Vagina (tissue), 2 donors: ENCODE measurements at regions of chr18 and their contacts with region 1.

Region 1: DNA sequence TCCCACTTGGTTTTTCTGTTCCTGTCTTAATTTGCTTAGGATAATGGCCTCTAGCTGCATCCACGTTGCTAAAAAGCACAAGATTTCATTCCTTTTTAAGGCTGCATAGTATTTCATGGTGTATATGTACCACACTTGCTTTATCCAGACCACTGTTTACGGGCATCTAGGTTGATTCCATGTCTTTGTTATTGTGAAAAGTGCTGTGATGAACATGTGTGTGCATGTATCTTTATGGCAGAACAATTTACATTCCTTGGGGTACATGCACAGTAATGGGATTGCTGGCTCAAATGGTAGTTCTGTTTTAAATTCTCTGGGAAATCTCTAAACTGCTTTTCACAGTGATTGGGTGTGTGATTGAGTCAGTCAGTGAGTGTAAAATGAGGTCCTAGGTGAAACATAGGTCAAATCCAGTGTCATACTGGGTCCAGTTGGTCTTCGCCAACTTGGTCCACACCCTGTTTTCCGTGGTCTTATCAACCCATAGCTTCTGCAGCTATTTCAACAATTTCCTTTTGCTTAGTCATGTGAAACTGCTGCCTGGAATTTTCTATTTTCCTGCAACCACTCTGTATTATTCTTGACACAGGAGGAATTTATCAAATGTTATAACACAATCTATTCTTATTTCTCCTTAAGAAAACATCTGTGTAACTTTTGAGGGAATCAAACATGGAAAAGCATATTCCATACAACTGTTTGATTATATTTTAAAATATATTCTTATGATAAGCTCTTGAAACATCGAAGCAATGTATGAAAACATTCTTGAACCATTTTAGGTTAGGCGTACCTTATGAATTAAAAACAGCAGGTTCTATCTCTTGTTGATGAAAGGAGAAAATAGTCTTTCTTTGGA is 82.9 kb downstream of the ADCYAP1 start:
- DNase-seq: no peak
- H3K4me3 ChIP-seq: no peak overlapping the region
- H3K27ac ChIP-seq: no peak overlapping the region
- H3K4me1 ChIP-seq: no peaks in the 10 kb centered on the region
- H3K27me3 ChIP-seq: no peaks in the 10 kb centered on the region
- CTCF ChIP-seq: no peak
- POLR2A ChIP-seq: no peak

Region 2: GRCh38 chr18:1026930-1027329 is 39.4 kb after region 1 on chr18:
- intact Hi-C with region 1: no loop called
- DNase-seq: no peak
- H3K4me3 ChIP-seq: no peak overlapping the region
- H3K27ac ChIP-seq: no peak overlapping the region
- H3K4me1 ChIP-seq: no peaks in the 10 kb centered on the region
- H3K27me3 ChIP-seq: no peaks in the 10 kb centered on the region
- CTCF ChIP-seq: no peak
- POLR2A ChIP-seq: no peak

Region 3: GRCh38 chr18:1048032-1048431 is 60.5 kb after region 1 on chr18:
- intact Hi-C with region 1: loop called (anchors 10 kb)
- DNase-seq: no peak
- H3K4me3 ChIP-seq: no peak overlapping the region
- H3K27ac ChIP-seq: no peak overlapping the region
- H3K4me1 ChIP-seq: no peaks in the 10 kb centered on the region
- H3K27me3 ChIP-seq: no peaks in the 10 kb centered on the region
- CTCF ChIP-seq: no peak
- POLR2A ChIP-seq: no peak